ENCODE measurements at regions of chr2 and their contacts with region 1.

Region 1: DNA sequence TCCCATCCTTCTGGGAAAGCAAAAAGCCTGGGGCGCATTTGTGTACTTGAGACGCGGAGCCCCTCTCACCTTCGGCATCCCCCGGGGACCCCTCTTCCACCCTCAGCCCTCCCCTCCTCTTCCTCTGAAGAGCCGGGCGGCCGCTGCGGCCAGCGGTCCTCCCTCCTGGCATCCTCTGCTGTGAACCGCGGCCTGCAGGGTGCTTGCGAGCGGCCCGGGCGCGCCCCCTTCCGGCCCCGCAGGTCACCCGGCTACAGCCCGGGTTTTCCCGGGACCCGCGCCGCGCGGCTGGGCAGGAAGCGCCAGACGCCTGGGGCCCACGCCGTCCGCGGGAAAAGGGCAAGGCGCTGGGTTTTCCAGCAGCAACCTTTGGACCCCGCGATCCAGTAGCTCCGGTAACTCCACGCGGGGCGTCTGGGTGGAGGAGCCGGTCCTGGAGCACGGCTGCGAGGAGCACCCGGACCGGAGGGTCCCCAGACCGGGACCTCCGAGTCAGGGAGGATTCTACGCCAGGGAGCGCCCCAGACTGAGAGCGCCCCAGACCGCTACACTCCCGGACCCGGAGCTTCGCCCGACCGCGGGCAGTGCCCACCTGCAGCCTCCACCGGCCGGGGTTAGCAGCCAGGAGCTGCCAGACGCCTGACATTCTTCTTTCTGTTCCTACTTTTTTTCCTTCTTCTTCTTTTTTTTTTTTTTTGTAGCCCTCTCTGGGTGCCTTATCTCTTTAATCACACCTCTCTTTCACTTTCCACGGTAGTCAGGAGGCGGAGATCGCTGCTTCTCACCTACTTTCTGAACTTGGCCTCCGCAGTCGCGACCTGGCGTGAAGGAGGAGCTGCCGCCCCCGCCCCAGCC is at the start of gene IL18R1:
- DNase-seq: peak; percentile 69
- ATAC-seq: peak; percentile 100
- H3K4me3 ChIP-seq: peak within 1 kb of the TSS; percentile 83
- H3K27ac ChIP-seq: peak within 1 kb of the TSS; percentile 65; the same call in 1 of the 2 replicates
- H3K4me1 ChIP-seq: peaks cover 2% of the 10 kb centered on the region; the same call in 1 of the 2 replicates
- H3K27me3 ChIP-seq: 0 out of 2 replicates have a peak, but pooled peaks cover 2% of the 10 kb centered on the region
- CTCF ChIP-seq: peak; percentile 90
- POLR2A ChIP-seq: no peak; the same call in 1 of the 2 replicates
- RAD21 ChIP-seq: peak; percentile 88
- total RNA-seq, gene IL18R1: 0.18 and 0.28 TPM in 2 replicates

Region 2: GRCh38 chr2:102166189-102166845 is 189.4 kb before region 1 on chr2:
- CTCF ChIA-PET with region 1: no interaction called
- POLR2A ChIA-PET with region 1: no interaction called
- dilution Hi-C with region 1: no loop called
- in situ Hi-C with region 1: no loop called
- intact Hi-C with region 1: loop called (anchors 10 kb)
- DNase-seq: peak; percentile 69
- ATAC-seq: peak; percentile 85
- H3K4me3 ChIP-seq: no peak overlapping the region
- H3K27ac ChIP-seq: no peak overlapping the region
- H3K4me1 ChIP-seq: peaks cover 4% of the 10 kb centered on the region; the same call in 1 of the 2 replicates
- H3K27me3 ChIP-seq: no peaks in the 10 kb centered on the region
- CTCF ChIP-seq: peak; percentile 59
- POLR2A ChIP-seq: 0 out of 2 replicates have a peak, but pooled peaks have one; percentile 24
- RAD21 ChIP-seq: peak; percentile 75

Region 3: GRCh38 chr2:102235491-102235890 is 120.3 kb before region 1 on chr2:
- CTCF ChIA-PET with region 1: interaction called, 4 read pairs
- POLR2A ChIA-PET with region 1: no interaction called
- dilution Hi-C with region 1: no loop called
- in situ Hi-C with region 1: no loop called
- intact Hi-C with region 1: loop called (anchors 1 kb)
- DNase-seq: peak; percentile 29
- ATAC-seq: peak; percentile 62
- H3K4me3 ChIP-seq: no peak overlapping the region
- H3K27ac ChIP-seq: no peak overlapping the region
- H3K4me1 ChIP-seq: peaks cover 7% of the 10 kb centered on the region
- H3K27me3 ChIP-seq: no peaks in the 10 kb centered on the region
- CTCF ChIP-seq: peak; percentile 55
- POLR2A ChIP-seq: no peak
- RAD21 ChIP-seq: peak; percentile 72

Region 4: DNA sequence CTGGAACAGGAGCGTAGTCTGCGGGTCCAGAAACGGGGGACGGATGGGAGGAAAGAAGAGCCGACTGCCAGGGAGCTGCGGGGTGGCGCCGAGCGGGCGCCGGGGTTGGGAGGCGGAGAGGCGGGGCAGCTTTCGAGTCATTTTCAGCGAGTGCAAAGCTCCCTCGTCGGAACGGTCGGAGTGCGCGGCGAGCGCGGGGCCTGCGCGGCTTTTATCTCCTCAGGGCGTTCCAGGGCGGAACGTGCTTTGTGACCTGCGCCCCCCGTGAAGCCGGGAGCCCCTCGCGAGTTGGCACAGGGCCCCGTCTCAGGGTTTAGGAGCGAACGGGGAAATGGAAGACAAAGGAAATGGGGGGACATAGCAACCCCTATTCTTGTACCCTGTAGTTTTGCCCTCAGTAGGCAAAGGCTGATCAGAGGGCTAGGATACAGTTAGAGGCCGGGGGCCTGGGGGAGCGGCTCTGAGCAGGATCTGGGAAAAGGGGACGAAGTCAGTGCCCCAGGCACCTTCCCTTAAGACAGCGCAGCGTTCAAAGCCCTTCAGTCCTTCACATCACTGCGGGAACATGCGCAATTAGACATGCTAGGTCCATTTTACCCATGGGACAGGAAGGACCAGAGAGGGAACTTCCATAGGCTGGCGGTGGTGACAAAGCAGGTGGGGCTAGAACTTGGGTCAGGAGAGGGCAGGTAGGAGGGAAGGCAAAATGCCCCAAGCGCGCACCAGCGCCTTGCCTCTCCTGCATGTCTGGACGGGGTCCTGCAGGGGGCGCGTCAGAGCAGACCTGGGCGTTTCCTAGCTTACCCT is 104.5 kb before region 1 on chr2:
- CTCF ChIA-PET with region 1: interaction called, 4 read pairs
- POLR2A ChIA-PET with region 1: no interaction called
- dilution Hi-C with region 1: no loop called
- in situ Hi-C with region 1: loop called (anchors 5 kb)
- intact Hi-C with region 1: loop called (anchors 1 kb)
- DNase-seq: no peak
- ATAC-seq: peak; percentile 76
- H3K4me3 ChIP-seq: peak overlapping the region; percentile 40
- H3K27ac ChIP-seq: no peak overlapping the region
- H3K4me1 ChIP-seq: no peaks in the 10 kb centered on the region
- H3K27me3 ChIP-seq: peaks cover 4% of the 10 kb centered on the region; the same call in 1 of the 2 replicates
- CTCF ChIP-seq: no peak
- POLR2A ChIP-seq: no peak
- RAD21 ChIP-seq: no peak

Measured in IMR-90 (cell line).